H1 (cell line): ENCODE measurements at regions of chr20 and their contacts with region 1.

Region 1: DNA sequence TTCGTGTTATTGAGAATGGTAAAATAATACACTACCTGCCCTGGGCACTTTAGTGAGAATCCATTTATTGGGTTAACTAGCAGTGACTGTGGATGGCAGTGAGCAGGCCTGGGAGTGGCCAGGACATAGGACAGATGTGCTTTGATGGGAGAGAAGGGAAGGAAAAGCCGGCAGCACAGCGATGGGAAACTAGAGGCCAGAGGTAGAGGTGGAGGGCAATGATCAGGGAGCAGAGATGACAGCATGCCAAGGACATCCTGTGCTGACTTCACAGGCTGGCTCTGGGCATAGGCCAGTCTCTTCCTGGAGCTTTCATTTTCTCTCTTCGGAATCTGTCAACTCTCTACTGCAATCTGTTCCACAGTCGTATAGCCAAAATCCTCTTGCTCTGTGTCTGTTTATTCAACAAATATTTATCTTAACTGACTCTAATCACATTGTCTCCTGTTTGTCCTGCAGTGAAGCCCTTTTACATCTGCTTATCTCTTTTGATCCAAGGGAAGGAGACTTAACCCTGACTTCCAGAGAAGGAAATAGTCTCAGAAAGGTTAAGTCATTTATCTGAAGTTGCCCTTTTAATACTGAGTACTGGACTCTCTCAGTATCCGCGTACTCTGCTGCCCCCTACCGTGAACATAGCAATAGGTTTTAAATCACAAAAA is 18.4 kb upstream of the MMP24 start:
- DNase-seq: peak in 1 of 2 experiments; percentile 81
- H3K4me3 ChIP-seq: no peak overlapping the region
- H3K27ac ChIP-seq: no peak overlapping the region
- H3K4me1 ChIP-seq: no peaks in the 10 kb centered on the region
- H3K27me3 ChIP-seq: no peaks in the 10 kb centered on the region
- CTCF ChIP-seq: peak in 2 of 3 experiments; percentile 80 to 82; a peak in 3 of 4 replicates
- EP300 ChIP-seq: no peak
- POLR2A ChIP-seq: no peak
- RAD21 ChIP-seq: peak; percentile 94 to 96

Region 2: GRCh38 chr20:35079472-35080347 is 128.4 kb before region 1 on chr20:
- CTCF ChIA-PET with region 1: no interaction called
- POLR2A ChIA-PET with region 1: no interaction called
- DNase-seq: no peak
- H3K4me3 ChIP-seq: no peak overlapping the region
- H3K27ac ChIP-seq: no peak overlapping the region
- H3K4me1 ChIP-seq: no peaks in the 10 kb centered on the region
- H3K27me3 ChIP-seq: no peaks in the 10 kb centered on the region
- CTCF ChIP-seq: no peak
- EP300 ChIP-seq: no peak
- POLR2A ChIP-seq: no peak
- RAD21 ChIP-seq: no peak

Region 3: GRCh38 chr20:35146920-35147574 is 61.0 kb before region 1 on chr20 and contains the start of gene EDEM2:
- CTCF ChIA-PET with region 1: interaction called, 64 read pairs
- POLR2A ChIA-PET with region 1: interaction called, 10 read pairs
- DNase-seq: peak; percentile 96 to 97
- H3K4me3 ChIP-seq: peak within 1 kb of the TSS; percentile 86 to 94 (median 90)
- H3K27ac ChIP-seq: peak within 1 kb of the TSS; percentile 68; the same call in 1 of the 2 replicates
- H3K4me1 ChIP-seq: 0 out of 7 replicates have a peak, but pooled peaks cover 0 to 3% (median 0%) of the 10 kb centered on the region in 4 experiments
- H3K27me3 ChIP-seq: no peaks in the 10 kb centered on the region
- CTCF ChIP-seq: 0 out of 4 replicates have a peak, but pooled peaks of 1 of the 3 experiments have one; percentile 4
- EP300 ChIP-seq: no peak
- POLR2A ChIP-seq: peak in 1 of 2 experiments; percentile 57; a peak in 2 of 3 replicates
- RAD21 ChIP-seq: peak in 1 of 2 experiments; percentile 29; a peak in 2 of 4 replicates
- total RNA-seq, gene EDEM2: 19.6 and 21.5 TPM in 2 replicates

Region 4: GRCh38 chr20:35171438-35171752 is 36.7 kb before region 1 on chr20:
- CTCF ChIA-PET with region 1: interaction called, 14 read pairs
- POLR2A ChIA-PET with region 1: no interaction called
- DNase-seq: no peak
- H3K4me3 ChIP-seq: peak overlapping the region in 3 of 4 experiments; percentile 39 to 54 (median 48); a peak in 5 of 8 replicates
- H3K27ac ChIP-seq: no peak overlapping the region
- H3K4me1 ChIP-seq: peaks cover under 1 to 18% (median 10%) of the 10 kb centered on the region in 4 experiments
- H3K27me3 ChIP-seq: peaks cover 0 to 2% (median 0%) of the 10 kb centered on the region in 4 experiments; a peak in 2 of 7 replicates
- CTCF ChIP-seq: no peak
- EP300 ChIP-seq: no peak
- POLR2A ChIP-seq: no peak
- RAD21 ChIP-seq: no peak

Region 5: DNA sequence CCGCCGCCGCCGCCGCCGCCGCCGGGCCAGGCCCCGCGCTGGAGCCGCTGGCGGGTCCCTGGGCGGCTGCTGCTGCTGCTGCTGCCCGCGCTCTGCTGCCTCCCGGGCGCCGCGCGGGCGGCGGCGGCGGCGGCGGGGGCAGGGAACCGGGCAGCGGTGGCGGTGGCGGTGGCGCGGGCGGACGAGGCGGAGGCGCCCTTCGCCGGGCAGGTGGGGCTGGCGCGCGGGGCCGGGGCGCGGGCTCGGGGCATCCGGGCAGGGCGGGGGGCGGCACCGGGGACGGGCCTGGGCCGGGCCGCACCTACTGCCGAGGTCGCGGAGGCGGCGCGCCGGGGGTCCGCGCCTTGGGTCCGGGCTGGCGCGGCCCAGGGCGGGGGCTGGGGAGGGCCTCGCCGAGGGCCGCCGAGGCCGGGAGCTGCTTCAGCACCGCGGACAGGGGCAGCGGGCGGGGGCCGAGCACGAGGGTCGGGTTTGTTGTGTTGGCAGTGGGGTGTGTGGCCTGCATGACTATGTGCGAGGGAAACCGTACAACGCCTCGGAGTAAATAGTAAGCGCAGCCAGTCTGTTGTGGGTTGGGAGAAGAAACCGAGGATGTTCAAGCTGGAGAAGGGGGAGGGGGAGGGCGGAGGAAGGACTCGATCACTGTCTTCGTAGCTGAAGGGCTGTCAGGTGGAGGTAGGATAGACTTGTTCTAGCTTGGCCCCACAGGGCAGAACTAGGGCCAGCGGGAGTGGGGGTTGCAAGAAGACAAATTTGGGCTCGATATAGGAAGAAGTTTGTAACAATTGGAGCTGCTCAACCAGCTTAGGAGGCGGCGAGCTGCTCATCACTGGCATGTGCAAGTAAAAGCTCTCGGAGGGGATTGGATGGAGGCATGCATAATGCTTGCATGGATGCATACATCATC is 18.9 kb after region 1 on chr20:
- CTCF ChIA-PET with region 1: interaction called, 13 read pairs
- POLR2A ChIA-PET with region 1: no interaction called
- DNase-seq: peak in 1 of 2 experiments; percentile 89
- H3K4me3 ChIP-seq: peak overlapping the region; percentile 44 to 59 (median 52)
- H3K27ac ChIP-seq: no peak overlapping the region
- H3K4me1 ChIP-seq: peaks cover 0 to 14% (median 6%) of the 10 kb centered on the region in 4 experiments; a peak in 5 of 7 replicates
- H3K27me3 ChIP-seq: peaks cover 0 to 13% (median 2%) of the 10 kb centered on the region in 4 experiments; a peak in 2 of 7 replicates
- CTCF ChIP-seq: no peak
- EP300 ChIP-seq: no peak
- POLR2A ChIP-seq: no peak
- RAD21 ChIP-seq: peak in 1 of 2 experiments; percentile 0; a peak in 1 of 4 replicates